Mammary epithelial cell (primary cell): ENCODE measurements at regions of chr3 and their contacts with region 1.

Region 1: GRCh38 chr3:180912304-180913296 is at the start of gene FXR1:
- DNase-seq: peak; percentile 87
- H3K4me3 ChIP-seq: peak within 1 kb of the TSS; percentile 81 to 93 (median 92)
- H3K27ac ChIP-seq: peak within 1 kb of the TSS; percentile 90
- H3K4me1 ChIP-seq: peaks cover 19% of the 10 kb centered on the region
- H3K27me3 ChIP-seq: no peaks in the 10 kb centered on the region
- CTCF ChIP-seq: peak; percentile 62 to 83
- total RNA-seq, gene FXR1: 105 to 132 TPM

Region 2: DNA sequence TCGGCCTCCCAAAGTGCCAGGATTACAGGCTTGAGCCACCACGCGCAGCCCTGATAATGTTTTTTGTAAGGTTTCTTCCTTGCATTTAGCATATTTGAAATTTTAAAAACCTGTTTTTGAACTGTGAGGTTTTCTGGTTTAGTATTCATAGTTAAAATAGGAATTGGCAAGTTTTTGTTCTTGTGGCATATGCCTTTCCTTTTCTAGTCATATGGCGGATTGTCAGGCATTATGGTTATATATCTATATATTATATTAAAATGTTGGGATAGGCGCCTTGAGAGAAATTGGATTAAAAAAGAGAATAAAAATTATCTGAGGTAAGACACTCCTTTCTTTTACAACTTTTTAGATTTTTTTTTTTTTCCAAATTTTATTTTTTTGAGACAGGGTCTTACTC is 28.2 kb after region 1 on chr3:
- CTCF ChIA-PET with region 1: no interaction called
- dilution Hi-C with region 1: no loop called
- in situ Hi-C with region 1: no loop called
- intact Hi-C with region 1: no loop called
- DNase-seq: no peak
- H3K4me3 ChIP-seq: no peak overlapping the region
- H3K27ac ChIP-seq: no peak overlapping the region
- H3K4me1 ChIP-seq: no peaks in the 10 kb centered on the region
- H3K27me3 ChIP-seq: no peaks in the 10 kb centered on the region
- CTCF ChIP-seq: no peak

Region 3: DNA sequence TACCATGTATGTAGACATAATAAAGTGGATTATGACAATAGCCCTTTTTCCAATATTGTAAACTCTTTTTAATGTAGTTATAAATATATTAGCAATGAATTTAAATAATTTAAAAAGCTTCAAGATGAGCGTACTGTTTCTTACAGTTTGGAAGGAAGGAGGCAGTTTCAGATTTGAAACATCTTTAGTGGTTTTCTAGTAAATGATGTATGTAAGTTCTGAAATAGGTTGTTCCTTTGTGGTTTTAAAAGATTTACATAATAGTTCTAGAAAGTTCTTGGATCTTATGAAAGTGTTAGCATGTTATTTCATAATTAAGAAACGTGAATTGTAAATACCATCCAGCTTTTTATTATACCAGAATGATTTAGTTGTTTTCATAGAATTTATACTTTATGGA is 60.9 kb after region 1 on chr3:
- CTCF ChIA-PET with region 1: no interaction called
- dilution Hi-C with region 1: no loop called
- in situ Hi-C with region 1: no loop called
- intact Hi-C with region 1: loop called (anchors 5 kb)
- DNase-seq: no peak
- H3K4me3 ChIP-seq: no peak overlapping the region
- H3K27ac ChIP-seq: no peak overlapping the region
- H3K4me1 ChIP-seq: no peaks in the 10 kb centered on the region
- H3K27me3 ChIP-seq: no peaks in the 10 kb centered on the region
- CTCF ChIP-seq: no peak

Region 4: GRCh38 chr3:181040030-181040429 is 127.4 kb after region 1 on chr3:
- CTCF ChIA-PET with region 1: interaction called, 12 read pairs
- dilution Hi-C with region 1: no loop called
- in situ Hi-C with region 1: no loop called
- intact Hi-C with region 1: no loop called
- DNase-seq: no peak
- H3K4me3 ChIP-seq: no peak overlapping the region
- H3K27ac ChIP-seq: no peak overlapping the region
- H3K4me1 ChIP-seq: no peaks in the 10 kb centered on the region
- H3K27me3 ChIP-seq: no peaks in the 10 kb centered on the region
- CTCF ChIP-seq: no peak